Activated CD4-positive, alpha-beta memory T cell treated with anti-CD3 and anti-CD28 coated beads for 36 hours (primary cell): ENCODE measurements at regions of chr11 and their contacts with region 1.

Region 1: GRCh38 chr11:94511932-94512781 is at the start of gene C11orf97:
- DNase-seq: peak; percentile 65
- H3K4me3 Mint-ChIP-seq: peak within 1 kb of the TSS; percentile 47
- H3K27ac Mint-ChIP-seq: no peak within 1 kb of the TSS
- H3K4me1 Mint-ChIP-seq: peaks cover 11% of the 10 kb centered on the region
- H3K27me3 Mint-ChIP-seq: peaks cover 21% of the 10 kb centered on the region
- total RNA-seq, gene C11orf97: not detected

Region 2: DNA sequence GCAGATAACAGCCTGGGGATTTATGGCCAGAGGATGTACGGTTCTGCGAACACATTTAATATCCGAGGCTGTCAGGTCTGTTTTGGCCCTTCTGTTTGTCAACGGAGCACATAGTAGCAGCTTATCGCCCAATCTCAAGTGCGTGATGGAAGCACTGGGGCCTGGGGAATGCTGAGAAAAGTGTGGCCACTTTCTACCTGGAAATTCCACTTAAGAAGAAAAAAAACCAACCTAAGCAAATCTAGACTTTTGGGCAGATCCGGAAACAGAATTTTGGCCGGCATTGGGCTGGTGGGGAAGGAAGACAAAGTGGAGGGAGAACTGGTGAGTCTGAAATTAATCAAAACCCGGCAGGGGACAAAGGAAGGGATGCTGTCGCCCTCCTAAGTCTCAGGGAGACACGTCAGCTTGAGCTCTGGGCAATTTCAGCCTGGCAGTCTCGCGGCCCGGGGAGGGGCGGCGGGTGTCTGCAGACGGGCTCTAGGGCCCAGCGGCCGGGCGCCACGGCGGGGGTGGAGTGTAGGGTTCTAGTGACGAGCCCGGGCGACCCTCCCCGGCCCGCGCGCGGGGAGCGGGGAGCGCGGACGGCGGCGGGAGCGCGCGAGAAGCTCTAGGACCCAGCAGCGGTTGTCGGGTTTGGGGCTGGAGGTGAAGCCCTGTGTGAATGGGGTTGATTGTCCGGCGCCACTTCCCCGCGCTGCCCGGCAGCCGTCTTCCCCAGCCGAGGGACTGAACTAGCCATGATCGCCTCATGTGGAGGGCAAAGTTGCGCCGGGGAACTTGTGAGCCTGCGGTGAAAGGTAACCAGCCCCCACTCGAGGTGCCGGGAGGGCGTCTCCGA is 255.8 kb after region 1 on chr11 and contains the start of gene AMOTL1:
- CTCF ChIA-PET with region 1: no interaction called
- POLR2A ChIA-PET with region 1: no interaction called
- intact Hi-C with region 1: loop called (anchors 10 kb)
- DNase-seq: peak; percentile 34
- H3K4me3 Mint-ChIP-seq: peak within 1 kb of the TSS; percentile 55
- H3K27ac Mint-ChIP-seq: no peak within 1 kb of the TSS
- H3K4me1 Mint-ChIP-seq: peaks cover 8% of the 10 kb centered on the region
- H3K27me3 Mint-ChIP-seq: peaks cover 42% of the 10 kb centered on the region
- total RNA-seq, gene AMOTL1: 0.24 to 0.31 TPM

Region 3: GRCh38 chr11:94800414-94800813 is 288.3 kb after region 1 on chr11:
- CTCF ChIA-PET with region 1: no interaction called
- POLR2A ChIA-PET with region 1: no interaction called
- intact Hi-C with region 1: no loop called
- DNase-seq: no peak
- H3K4me3 Mint-ChIP-seq: no peak overlapping the region
- H3K27ac Mint-ChIP-seq: no peak overlapping the region
- H3K4me1 Mint-ChIP-seq: no peaks in the 10 kb centered on the region
- H3K27me3 Mint-ChIP-seq: no peaks in the 10 kb centered on the region